ENCODE measurements at regions of chr7 and their contacts with region 1.

Region 1: DNA sequence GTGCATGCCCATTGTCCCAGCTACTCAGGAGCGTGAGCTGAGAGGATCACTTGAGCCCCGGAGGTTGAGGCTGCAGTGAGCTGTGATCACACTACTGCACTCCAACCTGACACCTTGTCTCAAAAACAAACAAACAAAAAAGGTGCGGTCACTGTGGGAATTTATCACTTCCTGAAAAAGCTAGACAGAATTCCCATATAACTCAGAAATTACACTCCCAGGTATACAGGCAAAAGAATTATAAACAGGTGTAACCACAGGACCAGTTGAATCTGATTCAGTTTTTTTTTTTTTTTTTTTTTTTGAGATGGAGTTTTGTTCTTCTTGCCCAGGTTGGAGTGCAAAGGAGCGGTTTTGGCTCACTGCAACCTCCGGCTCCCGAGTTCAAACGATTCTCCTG is 3.2 kb upstream of the OGDH start:
- DNase-seq: no peak
- H3K4me3 ChIP-seq: no peak overlapping the region
- H3K27ac ChIP-seq: no peak overlapping the region
- H3K27me3 ChIP-seq: peaks cover 5% of the 10 kb centered on the region
- CTCF ChIP-seq: no peak

Region 2: DNA sequence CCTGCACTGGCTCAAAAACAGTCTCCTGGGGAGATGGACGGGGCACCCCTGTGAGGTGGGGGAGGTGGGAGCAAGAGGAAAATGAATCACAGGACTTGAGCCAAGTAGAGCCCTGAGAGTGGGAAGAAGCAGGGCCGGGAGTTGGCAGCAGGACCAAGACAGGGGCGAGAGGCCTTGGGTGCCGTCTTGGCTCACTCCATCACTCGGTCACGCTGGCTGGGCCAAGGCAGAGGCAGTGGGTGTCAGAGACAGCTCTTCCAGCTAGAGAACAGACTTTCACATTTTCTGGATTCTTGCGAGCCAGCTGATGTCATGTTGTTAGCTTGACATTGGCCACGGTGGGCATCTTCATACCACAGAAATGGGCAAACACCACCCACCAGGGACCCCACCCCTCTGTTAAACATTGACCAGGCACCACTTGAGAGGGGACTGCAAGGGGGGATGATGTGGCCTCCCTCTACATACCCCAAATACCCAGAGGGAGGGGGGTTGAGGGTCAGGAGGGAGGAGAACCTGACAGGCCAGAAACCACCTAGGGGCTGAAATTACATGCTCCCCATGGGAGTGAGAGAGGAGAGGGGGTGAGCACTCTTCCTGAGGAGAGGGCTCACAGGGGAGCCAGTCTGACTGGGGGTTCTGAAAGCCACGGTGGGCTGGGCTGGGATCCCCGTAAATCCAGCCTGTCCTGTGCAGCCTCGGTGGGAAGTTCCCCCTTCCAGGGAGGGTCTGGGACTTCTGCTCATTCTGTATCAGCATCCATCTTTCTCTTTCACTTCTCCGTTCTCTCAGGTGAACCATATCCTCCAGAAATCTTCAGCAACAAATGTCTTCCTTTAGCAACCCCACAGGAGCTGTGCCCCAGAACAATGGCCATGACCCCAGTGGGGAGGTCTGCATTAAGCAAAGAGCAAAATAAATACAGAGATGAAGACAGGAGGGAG is 297.4 kb before region 1 on chr7:
- CTCF ChIA-PET with region 1: no interaction called
- POLR2A ChIA-PET with region 1: no interaction called
- DNase-seq: no peak
- H3K4me3 ChIP-seq: no peak overlapping the region
- H3K27ac ChIP-seq: no peak overlapping the region
- H3K27me3 ChIP-seq: peaks cover 26% of the 10 kb centered on the region
- CTCF ChIP-seq: no peak

Region 3: GRCh38 chr7:44633254-44634186 is 30.3 kb after region 1 on chr7:
- CTCF ChIA-PET with region 1: no interaction called
- POLR2A ChIA-PET with region 1: interaction called, 10 read pairs
- DNase-seq: peak; percentile 81
- H3K4me3 ChIP-seq: no peak overlapping the region
- H3K27ac ChIP-seq: peak overlapping the region; percentile 71
- H3K27me3 ChIP-seq: no peaks in the 10 kb centered on the region
- CTCF ChIP-seq: no peak

Measured in AG04450 (cell line).